Spleen (tissue), 13 donors: ENCODE measurements at regions of chr11 and their contacts with region 1.

Region 1: DNA sequence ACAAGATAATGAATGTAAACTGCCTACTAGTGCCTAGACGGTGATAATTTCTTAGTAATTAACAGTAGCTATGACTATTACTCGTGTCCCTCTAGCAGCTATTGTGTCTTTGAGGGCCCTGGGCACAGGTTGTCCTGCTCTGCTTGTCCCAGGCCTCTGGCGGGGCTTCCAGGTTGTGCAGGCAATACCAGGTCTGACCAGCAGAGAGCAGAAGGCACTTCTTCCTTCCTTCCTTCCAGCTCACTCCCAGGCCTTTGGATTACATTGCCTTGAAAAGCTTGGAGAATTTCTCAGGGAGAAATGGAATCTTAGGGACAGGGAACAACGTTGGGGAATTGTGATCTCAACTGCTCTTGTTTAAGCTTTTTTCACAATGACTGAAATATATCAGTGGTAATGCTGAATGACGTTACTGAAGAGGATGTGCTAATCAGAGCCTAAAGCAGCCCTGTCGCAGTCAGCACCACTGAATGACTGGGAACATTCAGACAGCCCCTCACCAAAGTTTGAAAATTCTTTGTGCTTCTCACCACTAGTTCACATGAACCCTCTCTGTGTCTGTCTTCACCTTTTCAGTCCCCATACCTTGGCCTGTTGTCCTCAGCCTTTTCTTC is 8.4 kb upstream of the CCKBR start:
- DNase-seq: peak; percentile 81
- H3K4me3 ChIP-seq: no peak overlapping the region
- H3K27ac ChIP-seq: no peak overlapping the region
- H3K4me1 ChIP-seq: no peaks in the 10 kb centered on the region
- H3K27me3 ChIP-seq: peaks cover 0 to 19% (median 0%) of the 10 kb centered on the region in 7 donors
- CTCF ChIP-seq: peak; percentile 24 to 84 (median 77)
- POLR2A ChIP-seq: no peak

Region 2: GRCh38 chr11:6353367-6353987 is 102.2 kb after region 1 on chr11:
- intact Hi-C with region 1: loop called (anchors 10 kb)
- DNase-seq: no peak
- H3K4me3 ChIP-seq: no peak overlapping the region
- H3K27ac ChIP-seq: no peak overlapping the region
- H3K4me1 ChIP-seq: peaks cover 0 to 6% (median 0%) of the 10 kb centered on the region in 6 donors
- H3K27me3 ChIP-seq: no peaks in the 10 kb centered on the region
- CTCF ChIP-seq: peak; percentile 73 to 95 (median 90)
- POLR2A ChIP-seq: no peak

Region 3: DNA sequence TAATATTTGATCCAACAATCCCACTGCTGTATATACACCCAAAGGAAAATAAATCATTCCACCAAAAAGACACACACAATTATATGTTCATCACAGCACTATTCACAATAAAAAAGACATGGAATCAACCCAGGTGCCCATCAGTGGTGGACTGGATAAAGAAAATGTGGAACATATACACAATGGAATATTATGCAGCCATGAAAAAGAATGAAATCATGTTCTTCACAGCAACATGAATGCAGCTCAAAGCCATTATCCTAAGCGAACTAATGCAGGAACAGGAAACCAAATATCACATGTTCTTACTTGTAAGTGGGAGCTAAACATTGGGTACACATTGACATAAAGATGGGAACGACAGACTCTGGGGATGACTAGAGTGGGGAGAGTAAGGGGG is 668.5 kb after region 1 on chr11:
- intact Hi-C with region 1: no loop called
- DNase-seq: no peak
- H3K4me3 ChIP-seq: no peak overlapping the region
- H3K27ac ChIP-seq: no peak overlapping the region
- H3K4me1 ChIP-seq: no peaks in the 10 kb centered on the region
- H3K27me3 ChIP-seq: peaks cover 0 to 7% (median 0%) of the 10 kb centered on the region in 7 donors
- CTCF ChIP-seq: no peak
- POLR2A ChIP-seq: no peak